ENCODE measurements at regions of chr3 and their contacts with region 1.

Region 1: GRCh38 chr3:192816351-192816750 is 89.0 kb upstream of the FGF12 start:
- DNase-seq: no peak
- ATAC-seq: no peak
- H3K4me3 Mint-ChIP-seq: no peak overlapping the region
- H3K27ac Mint-ChIP-seq: no peak overlapping the region
- H3K4me1 Mint-ChIP-seq: peaks cover 20% of the 10 kb centered on the region
- H3K27me3 Mint-ChIP-seq: peaks cover 11% of the 10 kb centered on the region

Region 2: DNA sequence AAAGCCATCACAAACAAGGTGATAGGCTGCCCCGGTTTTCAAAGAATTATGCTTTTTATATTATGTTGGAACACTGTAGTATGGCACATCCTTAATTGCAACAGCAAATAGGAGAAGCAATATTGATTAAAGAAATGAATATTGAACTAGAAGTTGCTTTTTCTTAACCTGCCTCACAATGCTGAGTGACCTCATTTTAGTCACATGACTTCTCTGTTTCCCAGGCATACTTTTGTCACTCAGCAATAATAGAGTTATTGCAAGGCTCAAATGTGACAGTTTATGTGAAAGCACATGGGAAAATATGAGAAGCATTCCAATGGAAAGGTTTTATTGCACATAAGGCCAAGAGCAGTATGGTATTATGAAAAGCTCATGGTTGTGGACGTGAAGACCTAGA is 489.7 kb before region 1 on chr3:
- CTCF ChIA-PET with region 1: no interaction called
- POLR2A ChIA-PET with region 1: no interaction called
- intact Hi-C with region 1: no loop called
- DNase-seq: no peak
- ATAC-seq: no peak
- H3K4me3 Mint-ChIP-seq: no peak overlapping the region
- H3K27ac Mint-ChIP-seq: no peak overlapping the region
- H3K4me1 Mint-ChIP-seq: peaks cover 4% of the 10 kb centered on the region
- H3K27me3 Mint-ChIP-seq: no peaks in the 10 kb centered on the region

Region 3: DNA sequence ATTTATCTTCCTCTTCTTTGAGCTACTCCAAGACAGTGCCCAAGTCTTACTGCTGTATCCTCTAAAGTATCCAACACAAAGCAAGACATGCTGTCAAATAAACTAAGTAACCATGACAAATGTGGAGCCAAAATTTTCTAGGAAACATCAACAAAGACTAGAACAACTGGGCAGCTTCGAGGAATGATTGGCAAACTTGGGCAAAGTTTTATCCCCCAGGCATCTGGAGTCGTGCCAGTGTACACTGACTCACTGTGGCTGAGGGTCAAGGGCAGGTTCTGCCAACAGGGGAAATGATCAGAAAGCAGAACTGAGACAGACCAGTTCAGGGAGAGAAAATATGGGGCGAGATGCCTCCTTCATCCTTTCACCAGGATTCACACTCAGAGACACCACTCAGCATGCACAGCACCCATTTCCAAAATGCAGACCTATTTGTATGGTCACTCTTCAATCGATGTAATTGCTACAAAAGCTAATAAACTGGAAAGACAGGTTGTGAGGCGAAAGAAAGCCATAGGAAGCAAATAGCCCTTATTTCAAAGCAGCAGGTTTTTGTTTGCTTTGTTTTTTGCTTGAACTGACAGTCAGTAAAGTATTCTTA is 35.6 kb after region 1 on chr3:
- CTCF ChIA-PET with region 1: no interaction called
- POLR2A ChIA-PET with region 1: no interaction called
- intact Hi-C with region 1: loop called in 1 of 2 experiments (anchors 1 kb)
- DNase-seq: no peak
- ATAC-seq: no peak
- H3K4me3 Mint-ChIP-seq: no peak overlapping the region
- H3K27ac Mint-ChIP-seq: no peak overlapping the region
- H3K4me1 Mint-ChIP-seq: peaks cover 18% of the 10 kb centered on the region
- H3K27me3 Mint-ChIP-seq: peaks cover 11% of the 10 kb centered on the region

Region 4: GRCh38 chr3:192917404-192918274 is 101.3 kb after region 1 on chr3 and contains the start of gene MB21D2:
- CTCF ChIA-PET with region 1: interaction called, 8 read pairs
- POLR2A ChIA-PET with region 1: no interaction called
- intact Hi-C with region 1: loop called (anchors 1 to 5 kb)
- DNase-seq: peak; percentile 67
- ATAC-seq: peak; percentile 63
- H3K4me3 Mint-ChIP-seq: peak within 1 kb of the TSS; percentile 82
- H3K27ac Mint-ChIP-seq: peak within 1 kb of the TSS; percentile 71
- H3K4me1 Mint-ChIP-seq: peaks cover 20% of the 10 kb centered on the region
- H3K27me3 Mint-ChIP-seq: peaks cover 65% of the 10 kb centered on the region
- total RNA-seq, gene MB21D2: 2.2 to 2.5 TPM

Region 5: DNA sequence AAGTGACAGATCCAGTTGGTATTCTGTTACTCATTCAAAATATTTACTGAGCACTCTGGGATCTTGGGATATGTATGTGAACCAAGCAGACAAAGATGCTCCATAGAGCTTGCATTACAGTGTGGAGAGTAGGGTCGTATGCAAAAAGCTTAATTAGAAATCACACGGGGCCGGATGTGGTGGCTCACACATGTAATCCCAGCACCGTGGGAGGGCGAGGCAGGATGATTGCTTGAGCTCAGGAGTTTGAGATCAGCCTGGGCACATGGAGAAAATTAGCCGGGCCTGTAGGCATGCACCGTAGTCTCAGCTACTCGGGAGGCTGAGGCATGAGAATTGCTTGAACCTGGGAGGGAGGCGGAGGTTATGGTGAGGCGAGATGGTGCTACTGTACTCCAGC is 170.0 kb after region 1 on chr3:
- CTCF ChIA-PET with region 1: no interaction called
- POLR2A ChIA-PET with region 1: no interaction called
- intact Hi-C with region 1: no loop called
- DNase-seq: no peak
- ATAC-seq: no peak
- H3K4me3 Mint-ChIP-seq: no peak overlapping the region
- H3K27ac Mint-ChIP-seq: no peak overlapping the region
- H3K4me1 Mint-ChIP-seq: no peaks in the 10 kb centered on the region
- H3K27me3 Mint-ChIP-seq: peaks cover 2% of the 10 kb centered on the region

Region 6: GRCh38 chr3:193465992-193466608 is 649.7 kb after region 1 on chr3:
- CTCF ChIA-PET with region 1: no interaction called
- POLR2A ChIA-PET with region 1: no interaction called
- intact Hi-C with region 1: loop called in 1 of 2 experiments (anchors 10 kb)
- DNase-seq: no peak
- ATAC-seq: no peak
- H3K4me3 Mint-ChIP-seq: no peak overlapping the region
- H3K27ac Mint-ChIP-seq: no peak overlapping the region
- H3K4me1 Mint-ChIP-seq: no peaks in the 10 kb centered on the region
- H3K27me3 Mint-ChIP-seq: no peaks in the 10 kb centered on the region